Motor neuron (in vitro differentiated cells): ENCODE measurements at regions of chr14 and their contacts with region 1.

Region 1: DNA sequence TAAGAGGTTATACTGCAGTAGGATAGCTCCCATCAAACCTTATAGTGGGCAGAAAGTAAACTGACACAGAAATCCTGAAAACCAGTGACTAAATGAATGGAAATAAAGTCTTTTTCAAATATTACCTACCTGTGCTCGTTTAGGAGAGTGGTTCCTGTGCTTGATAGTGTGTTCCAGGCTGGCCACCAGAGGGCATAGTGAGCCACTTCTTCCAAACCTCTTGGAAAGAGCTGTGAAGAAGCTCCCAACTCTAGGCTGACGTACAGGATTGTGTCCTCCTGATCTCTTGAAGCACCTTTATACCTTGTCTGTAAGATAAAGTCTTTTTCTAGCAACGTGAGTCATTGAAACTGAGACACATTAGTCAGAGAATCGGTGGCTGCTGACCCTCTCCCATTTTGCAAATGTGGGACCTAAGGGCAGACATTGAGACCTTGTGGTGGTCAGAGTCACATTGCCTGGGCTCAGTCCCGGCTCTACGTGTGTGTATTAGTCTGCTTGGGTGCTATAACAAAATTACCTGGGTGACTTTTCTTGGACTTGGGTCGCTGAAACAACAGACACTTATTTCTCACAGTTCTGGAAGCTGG is 17.6 kb downstream of the TDP1 start:
- ATAC-seq: peak; percentile 61 to 97 (median 86)
- H3K4me3 ChIP-seq: no peak overlapping the region
- H3K27ac ChIP-seq: no peak overlapping the region
- H3K4me1 ChIP-seq: no peaks in the 10 kb centered on the region

Region 2: GRCh38 chr14:90060312-90060964 is 87.1 kb after region 1 on chr14:
- in situ Hi-C with region 1: no loop called
- ATAC-seq: peak; percentile 78 to 95 (median 91)
- H3K4me3 ChIP-seq: peak overlapping the region; percentile 32 to 43 (median 39)
- H3K27ac ChIP-seq: no peak overlapping the region
- H3K4me1 ChIP-seq: no peaks in the 10 kb centered on the region

Region 3: DNA sequence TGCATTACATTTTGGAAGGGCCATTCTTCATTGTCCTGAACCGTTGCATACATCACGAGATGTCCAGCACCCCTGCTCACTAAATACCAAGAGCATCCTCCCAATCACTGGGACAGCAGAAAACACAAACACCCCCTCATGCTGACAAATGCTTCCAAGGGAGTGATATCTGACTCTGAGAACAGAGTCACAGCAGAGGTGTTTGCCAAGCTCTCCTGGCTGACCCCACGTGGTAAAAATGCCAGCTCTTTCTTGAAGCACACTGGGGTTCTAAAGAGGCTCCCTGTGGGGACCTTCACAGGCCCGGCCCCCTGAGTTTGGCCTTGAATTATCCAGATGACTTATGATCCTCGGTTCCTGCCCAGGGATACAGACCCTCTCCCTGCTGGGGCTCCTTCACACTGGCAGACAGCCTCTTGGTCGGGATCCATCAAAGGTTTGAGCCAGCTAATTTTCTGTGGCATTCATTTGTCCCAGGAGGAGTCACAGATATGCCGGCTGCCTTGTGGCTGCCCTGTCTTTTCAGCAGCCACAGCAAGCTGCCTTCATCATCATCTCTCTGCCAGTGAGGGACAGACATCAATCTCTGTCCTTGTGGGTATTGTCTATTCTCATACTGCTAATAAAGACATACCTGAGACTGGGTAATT is 239.9 kb after region 1 on chr14:
- in situ Hi-C with region 1: loop called in 1 of 9 experiments (anchors 10 kb)
- ATAC-seq: no peak
- H3K4me3 ChIP-seq: no peak overlapping the region
- H3K27ac ChIP-seq: no peak overlapping the region
- H3K4me1 ChIP-seq: no peaks in the 10 kb centered on the region

Region 4: DNA sequence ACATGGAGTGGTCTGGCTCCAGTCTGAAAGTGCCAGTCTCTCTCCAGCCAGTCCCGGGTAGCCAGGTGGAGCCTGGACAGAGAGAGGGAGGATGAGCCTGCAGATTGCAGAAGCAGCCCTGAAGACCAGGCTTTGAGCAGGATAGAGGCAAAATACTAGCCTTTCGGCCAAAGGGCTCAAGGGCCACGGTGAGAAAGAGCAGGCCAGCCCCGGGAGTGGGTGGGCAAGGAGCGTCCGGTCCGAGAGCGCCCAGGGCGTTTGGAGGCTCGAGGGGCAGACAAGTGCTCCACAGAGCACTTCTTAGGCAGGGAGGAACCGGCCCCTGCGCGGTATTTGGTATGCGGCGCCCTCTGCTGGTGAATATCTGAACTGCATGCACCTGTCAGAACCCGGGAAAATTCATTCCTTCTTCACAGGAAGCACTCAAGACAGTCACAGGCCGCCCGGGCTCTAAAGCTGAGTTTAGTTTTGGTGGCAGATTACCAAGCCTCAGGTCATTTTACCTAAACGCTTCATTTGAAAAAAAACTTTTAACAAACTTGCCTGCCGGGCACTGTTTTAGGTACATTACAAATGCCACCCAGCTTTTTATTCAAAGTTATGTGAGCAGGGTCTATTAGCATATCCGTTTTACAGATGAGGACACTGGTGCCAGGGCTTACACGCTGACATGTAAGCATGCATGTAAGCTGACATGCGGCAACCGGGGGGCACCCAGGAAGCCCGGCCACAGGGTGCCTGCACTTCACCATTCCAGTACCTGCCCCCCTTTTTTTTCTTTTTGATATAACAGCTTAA is 262.0 kb after region 1 on chr14:
- in situ Hi-C with region 1: loop called in 2 of 9 experiments (anchors 25 kb)
- ATAC-seq: peak in 6 of 8 experiments; percentile 36 to 97 (median 81)
- H3K4me3 ChIP-seq: no peak overlapping the region
- H3K27ac ChIP-seq: no peak overlapping the region
- H3K4me1 ChIP-seq: no peaks in the 10 kb centered on the region

Region 5: GRCh38 chr14:90697577-90698206 is 724.4 kb after region 1 on chr14:
- in situ Hi-C with region 1: no loop called
- ATAC-seq: peak; percentile 64 to 93 (median 75)
- H3K4me3 ChIP-seq: no peak overlapping the region
- H3K27ac ChIP-seq: no peak overlapping the region
- H3K4me1 ChIP-seq: peaks cover 37 to 39% of the 10 kb centered on the region in 2 donors

Region 6: DNA sequence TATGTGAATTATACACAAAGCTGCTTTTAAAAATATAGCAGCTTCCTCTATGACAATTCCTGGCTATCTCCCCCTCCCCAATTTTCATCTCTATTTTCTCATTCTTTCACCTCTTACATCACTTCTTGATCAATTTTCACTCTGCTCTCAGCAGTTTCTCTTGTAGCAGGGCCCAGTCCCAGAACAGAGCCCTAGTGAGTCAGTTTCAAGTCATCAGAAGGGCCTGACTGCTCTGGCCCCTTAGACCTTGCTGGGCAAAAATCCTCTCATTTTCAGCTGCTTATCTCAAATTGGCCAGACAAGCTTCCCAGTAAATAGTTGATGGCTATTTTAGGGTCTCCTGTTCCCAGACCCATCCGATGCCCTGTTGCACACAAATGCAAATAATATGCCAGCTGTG is 741.5 kb after region 1 on chr14:
- in situ Hi-C with region 1: no loop called
- ATAC-seq: peak in 1 of 8 experiments; percentile 53
- H3K4me3 ChIP-seq: no peak overlapping the region
- H3K27ac ChIP-seq: no peak overlapping the region
- H3K4me1 ChIP-seq: no peaks in the 10 kb centered on the region